ENCODE measurements at regions of chr7 and their contacts with region 1.

Region 1: DNA sequence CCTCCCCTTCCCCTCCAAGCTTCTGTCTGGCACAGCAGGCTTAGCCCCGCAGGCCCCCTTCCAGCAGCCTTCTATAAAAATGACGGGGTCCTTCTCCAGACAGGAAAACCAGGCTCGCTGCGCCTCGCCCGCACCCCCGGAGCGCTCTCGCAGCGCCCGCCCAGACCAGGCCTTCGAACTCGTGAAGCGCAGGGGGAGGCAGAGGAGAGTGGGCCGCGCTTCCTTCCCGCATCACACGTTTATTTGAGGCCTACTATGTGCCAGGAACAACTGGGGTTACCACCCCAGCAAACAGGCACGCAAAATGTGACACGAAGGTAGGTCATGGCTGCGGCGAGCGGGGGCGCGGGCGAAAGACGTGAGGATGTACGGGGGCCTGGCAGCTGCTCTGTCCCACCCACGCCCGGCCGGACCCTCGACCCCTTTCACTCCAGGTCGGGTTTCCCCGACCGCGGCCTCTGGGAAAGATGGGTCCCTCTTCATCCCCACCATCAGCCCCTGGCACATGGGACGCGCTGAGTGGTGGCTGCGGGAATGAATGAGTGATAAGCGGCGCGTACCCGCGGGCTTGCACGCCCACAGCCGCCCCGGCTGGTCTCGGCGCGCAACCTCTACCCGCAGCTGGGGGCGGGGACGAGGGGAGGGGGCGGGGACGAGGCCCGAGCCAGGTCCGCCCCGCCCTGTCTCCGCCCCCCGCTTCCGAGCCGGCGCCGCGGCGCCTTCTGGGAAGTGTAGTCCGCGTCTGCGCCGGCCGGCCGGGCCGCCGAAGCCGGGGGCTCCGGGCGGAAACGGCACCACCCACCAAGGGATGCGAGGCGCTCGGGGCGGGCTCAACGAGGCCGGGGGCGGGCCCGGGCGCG is 59.1 kb downstream of the ZNF467 start:
- DNase-seq: no peak
- H3K4me3 ChIP-seq: peak overlapping the region; percentile 75
- CTCF ChIP-seq: no peak

Region 2: GRCh38 chr7:149662591-149663095 is 51.6 kb before region 1 on chr7:
- CTCF ChIA-PET with region 1: interaction called, 23 read pairs
- POLR2A ChIA-PET with region 1: no interaction called
- DNase-seq: no peak
- H3K4me3 ChIP-seq: no peak overlapping the region
- CTCF ChIP-seq: peak; percentile 55

Region 3: DNA sequence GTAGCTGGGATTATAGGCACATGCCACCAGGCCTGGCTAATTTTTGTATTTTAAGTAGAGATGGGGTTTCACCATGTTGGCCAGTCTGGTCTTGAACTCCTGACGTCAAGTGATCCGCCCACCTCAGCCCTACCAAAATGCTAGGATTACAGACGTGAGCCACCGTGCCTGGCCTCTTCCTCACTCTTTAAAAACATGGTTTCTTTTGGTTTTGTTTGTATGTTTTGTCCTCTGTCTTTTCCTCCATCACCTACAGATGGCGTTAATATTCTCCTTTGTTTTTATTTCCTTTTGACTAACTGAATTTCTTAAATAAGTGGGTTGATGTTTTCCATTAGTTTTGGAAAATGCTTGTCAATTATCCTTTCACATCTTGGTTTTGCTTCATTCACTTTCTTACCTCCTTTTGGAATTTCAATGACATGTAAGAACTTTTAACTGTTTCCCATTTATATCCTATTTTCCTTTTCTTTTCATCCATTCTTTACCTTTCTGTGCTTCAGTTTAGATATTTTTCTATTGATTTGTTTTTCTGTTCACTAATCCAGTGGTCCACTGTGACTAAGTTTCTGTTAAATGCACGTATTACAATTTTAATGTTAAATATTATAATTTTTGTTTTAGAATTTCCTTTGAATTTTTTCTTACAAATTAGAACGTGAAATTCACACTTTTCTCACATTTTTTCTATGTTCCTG is 45.0 kb before region 1 on chr7:
- CTCF ChIA-PET with region 1: interaction called, 16 read pairs
- POLR2A ChIA-PET with region 1: no interaction called
- DNase-seq: no peak
- H3K4me3 ChIP-seq: no peak overlapping the region
- CTCF ChIP-seq: peak; percentile 17

Measured in AG04449 (cell line).